HEK293 (cell line): ENCODE measurements at regions of chr20 and their contacts with region 1.

Region 1: DNA sequence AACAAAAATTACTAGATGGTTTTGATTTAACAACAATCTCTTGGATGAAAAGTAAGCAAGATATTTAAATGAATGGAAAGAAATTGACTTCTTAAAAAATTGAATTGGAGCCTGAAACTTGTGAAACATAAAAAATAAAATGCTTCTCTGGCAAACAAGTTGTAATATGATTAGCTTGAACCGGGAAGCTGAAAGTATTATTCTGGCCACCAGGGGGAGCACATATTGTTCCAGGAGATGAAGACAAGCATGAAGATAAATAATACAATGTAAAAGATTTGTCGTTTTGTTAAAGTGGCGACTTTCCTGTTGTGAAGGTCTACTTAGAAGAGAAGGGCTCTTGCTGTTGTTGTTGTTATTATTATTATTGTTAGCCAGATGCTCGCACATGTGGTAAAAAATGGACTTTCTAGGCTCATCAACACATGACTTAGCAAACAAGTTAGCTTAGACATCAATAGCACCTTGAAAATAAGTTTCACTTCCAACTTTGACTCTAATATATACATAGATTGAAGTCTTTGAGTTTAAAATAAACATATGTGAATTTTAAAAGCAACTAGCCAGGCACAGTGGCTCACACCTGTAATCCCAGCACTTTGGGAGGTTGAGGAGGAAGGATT is 14.2 kb downstream of the PAX1 start:
- H3K4me3 ChIP-seq: no peak overlapping the region
- H3K27ac ChIP-seq: no peak overlapping the region
- H3K4me1 ChIP-seq: no peaks in the 10 kb centered on the region
- CTCF ChIP-seq: no peak

Region 2: DNA sequence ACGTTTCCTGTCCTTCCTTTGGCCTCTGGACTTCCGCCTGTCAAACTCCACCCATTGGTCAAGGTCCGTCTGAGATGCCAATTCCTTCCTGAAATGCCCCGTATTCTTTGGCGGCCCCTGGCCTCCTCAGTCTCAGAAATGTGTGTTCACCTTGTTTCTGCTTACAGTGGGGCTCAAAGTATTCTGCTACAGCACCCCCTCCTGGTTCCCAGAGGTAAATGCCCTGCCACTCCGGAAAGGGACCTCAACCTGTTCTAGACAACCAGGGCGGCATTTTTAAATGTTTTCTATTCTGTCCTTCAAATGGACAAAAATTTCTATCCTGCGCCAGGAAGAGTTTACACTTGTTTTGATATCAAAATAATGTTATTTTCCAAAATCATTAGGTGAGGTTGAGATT is 26.4 kb before region 1 on chr20:
- CTCF ChIA-PET with region 1: interaction called, 12 read pairs
- POLR2A ChIA-PET with region 1: interaction called, 4 read pairs
- H3K4me3 ChIP-seq: no peak overlapping the region
- H3K27ac ChIP-seq: no peak overlapping the region
- H3K4me1 ChIP-seq: no peaks in the 10 kb centered on the region
- CTCF ChIP-seq: 0 out of 2 replicates have a peak, but pooled peaks have one; percentile 27

Region 3: GRCh38 chr20:21702553-21703470 is 16.9 kb before region 1 on chr20:
- CTCF ChIA-PET with region 1: interaction called, 20 read pairs
- POLR2A ChIA-PET with region 1: interaction called, 7 read pairs
- H3K4me3 ChIP-seq: peak overlapping the region; percentile 28
- H3K27ac ChIP-seq: no peak overlapping the region
- H3K4me1 ChIP-seq: 0 out of 2 replicates have a peak, but pooled peaks cover 2% of the 10 kb centered on the region
- CTCF ChIP-seq: no peak

Region 4: GRCh38 chr20:21739682-21740081 is 20.0 kb after region 1 on chr20:
- CTCF ChIA-PET with region 1: interaction called, 10 read pairs
- POLR2A ChIA-PET with region 1: no interaction called
- H3K4me3 ChIP-seq: no peak overlapping the region
- H3K27ac ChIP-seq: no peak overlapping the region
- H3K4me1 ChIP-seq: no peaks in the 10 kb centered on the region
- CTCF ChIP-seq: no peak

Region 5: DNA sequence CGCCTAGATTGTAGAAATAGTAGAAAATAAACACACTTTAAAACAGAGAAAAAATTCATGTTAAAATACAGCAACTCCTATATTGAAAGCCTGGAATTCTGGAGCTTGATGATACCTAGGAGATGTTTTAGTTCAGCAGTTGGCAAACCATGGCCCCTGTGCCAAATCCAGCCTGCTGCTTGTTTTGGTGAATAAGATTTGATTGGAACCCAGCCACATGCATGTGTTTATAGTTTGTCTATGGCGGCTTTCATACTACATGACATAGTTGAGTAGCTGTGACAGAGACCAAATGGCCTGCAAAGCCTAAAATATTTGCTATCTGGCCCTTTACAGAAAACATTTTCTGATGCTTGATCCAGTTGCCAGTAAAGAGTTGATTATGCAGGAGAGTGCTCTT is 42.9 kb after region 1 on chr20:
- CTCF ChIA-PET with region 1: interaction called, 21 read pairs
- POLR2A ChIA-PET with region 1: no interaction called
- H3K4me3 ChIP-seq: no peak overlapping the region
- H3K27ac ChIP-seq: no peak overlapping the region
- H3K4me1 ChIP-seq: no peaks in the 10 kb centered on the region
- CTCF ChIP-seq: no peak

Region 6: DNA sequence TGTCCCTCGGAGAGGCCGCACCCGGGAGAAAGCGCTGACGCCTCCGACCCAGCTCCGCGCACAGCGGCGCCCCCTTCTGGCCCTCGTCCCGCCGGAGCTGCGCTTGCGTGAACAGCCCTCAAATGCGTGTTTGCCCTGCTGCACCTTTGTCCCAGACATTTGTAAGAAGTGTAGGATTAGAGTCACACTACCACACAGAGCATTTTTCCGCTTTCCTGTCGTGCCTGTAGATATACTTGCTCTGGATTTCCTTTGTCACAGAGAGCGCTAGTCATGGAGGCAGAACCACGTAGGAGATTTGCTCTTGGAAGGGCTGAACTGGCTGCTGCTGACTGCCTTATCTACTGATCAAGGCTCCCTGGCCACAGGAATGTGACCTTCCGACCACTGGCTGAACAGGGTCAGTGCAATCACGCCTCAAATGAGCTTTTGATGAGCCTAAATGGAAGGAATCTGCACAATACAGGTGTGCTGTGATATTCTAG is 48.1 kb after region 1 on chr20:
- CTCF ChIA-PET with region 1: interaction called, 21 read pairs
- POLR2A ChIA-PET with region 1: no interaction called
- H3K4me3 ChIP-seq: peak overlapping the region; percentile 24; the same call in 1 of the 2 replicates
- H3K27ac ChIP-seq: no peak overlapping the region
- H3K4me1 ChIP-seq: no peaks in the 10 kb centered on the region
- CTCF ChIP-seq: peak; percentile 74